ENCODE measurements at regions of chr16 and their contacts with region 1.

Region 1: DNA sequence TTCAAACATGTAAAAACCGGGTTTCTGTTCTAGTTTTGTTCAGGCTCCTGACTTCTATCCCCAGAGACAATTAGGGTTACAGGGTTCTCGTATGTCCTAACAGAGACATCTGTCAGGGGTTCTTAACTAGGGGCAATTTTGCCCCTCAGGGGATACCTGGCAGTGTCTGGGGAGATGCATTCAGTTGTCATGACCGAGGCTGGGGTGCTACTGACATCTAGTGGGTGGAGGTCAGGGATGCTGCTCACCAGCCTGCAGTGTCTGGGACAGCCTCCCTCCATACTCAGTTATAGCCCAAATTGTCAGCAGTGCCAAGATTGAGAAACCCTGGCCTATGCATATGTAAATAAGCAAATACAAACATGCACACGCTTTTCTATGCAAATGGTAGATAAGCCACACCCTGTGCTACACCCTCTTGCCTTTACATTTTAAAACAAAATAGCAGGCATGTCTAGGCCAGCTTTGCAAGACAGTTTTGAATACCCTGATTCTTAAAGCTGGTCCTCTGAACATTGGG is 37.4 kb downstream of the CLEC16A start:
- DNase-seq: no peak
- ATAC-seq: no peak

Region 2: DNA sequence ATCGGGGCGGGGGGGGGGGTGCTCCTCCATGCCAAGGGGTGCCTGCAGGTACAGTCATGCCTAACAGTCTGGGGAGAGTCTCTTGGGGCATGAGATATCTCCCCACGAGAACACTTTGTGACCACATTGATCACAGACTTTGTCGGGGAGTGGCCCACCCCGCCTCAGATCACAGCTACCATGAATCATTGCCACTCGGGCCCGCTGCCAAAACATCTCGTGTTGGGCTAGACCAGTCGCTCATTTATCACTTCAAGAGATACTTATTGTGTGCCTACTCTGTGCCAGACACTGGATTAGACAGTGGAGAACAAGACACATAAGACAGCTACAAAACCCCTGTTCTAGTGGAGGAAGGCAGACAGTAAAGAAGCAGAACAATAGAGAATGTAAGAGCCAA is 35.2 kb after region 1 on chr16:
- intact Hi-C with region 1: no loop called
- DNase-seq: no peak
- ATAC-seq: peak; percentile 48

Region 3: DNA sequence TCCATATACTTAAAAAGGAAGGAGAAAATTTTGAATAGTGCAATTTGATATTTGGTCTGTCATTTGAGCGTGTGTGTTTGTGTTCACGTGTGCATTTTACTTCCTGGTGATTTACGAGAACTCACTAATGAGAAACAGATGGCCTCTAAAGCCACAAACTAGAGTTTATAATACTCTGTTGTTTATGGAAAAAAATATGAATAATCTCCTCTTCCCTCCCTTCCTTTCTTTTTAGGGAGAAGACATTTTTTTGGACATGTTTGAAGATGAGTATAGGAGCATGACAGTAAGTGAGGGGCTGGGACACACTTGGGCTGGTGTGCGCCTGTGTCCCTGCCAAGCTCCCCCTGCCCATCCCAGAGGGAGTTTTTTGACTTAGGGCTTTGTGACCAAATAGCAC is 65.3 kb after region 1 on chr16:
- intact Hi-C with region 1: loop called (anchors 5 kb)
- DNase-seq: no peak
- ATAC-seq: no peak